ENCODE measurements at regions of chr14 and their contacts with region 1.

Region 1: GRCh38 chr14:55221186-55221585 is 29.8 kb upstream of the DLGAP5 start:
- DNase-seq: peak; percentile 71
- H3K4me3 ChIP-seq: no peak overlapping the region
- H3K27ac ChIP-seq: no peak overlapping the region
- H3K4me1 ChIP-seq: peaks cover 11% of the 10 kb centered on the region
- H3K27me3 ChIP-seq: no peaks in the 10 kb centered on the region
- CTCF ChIP-seq: no peak
- POLR2A ChIP-seq: no peak

Region 2: DNA sequence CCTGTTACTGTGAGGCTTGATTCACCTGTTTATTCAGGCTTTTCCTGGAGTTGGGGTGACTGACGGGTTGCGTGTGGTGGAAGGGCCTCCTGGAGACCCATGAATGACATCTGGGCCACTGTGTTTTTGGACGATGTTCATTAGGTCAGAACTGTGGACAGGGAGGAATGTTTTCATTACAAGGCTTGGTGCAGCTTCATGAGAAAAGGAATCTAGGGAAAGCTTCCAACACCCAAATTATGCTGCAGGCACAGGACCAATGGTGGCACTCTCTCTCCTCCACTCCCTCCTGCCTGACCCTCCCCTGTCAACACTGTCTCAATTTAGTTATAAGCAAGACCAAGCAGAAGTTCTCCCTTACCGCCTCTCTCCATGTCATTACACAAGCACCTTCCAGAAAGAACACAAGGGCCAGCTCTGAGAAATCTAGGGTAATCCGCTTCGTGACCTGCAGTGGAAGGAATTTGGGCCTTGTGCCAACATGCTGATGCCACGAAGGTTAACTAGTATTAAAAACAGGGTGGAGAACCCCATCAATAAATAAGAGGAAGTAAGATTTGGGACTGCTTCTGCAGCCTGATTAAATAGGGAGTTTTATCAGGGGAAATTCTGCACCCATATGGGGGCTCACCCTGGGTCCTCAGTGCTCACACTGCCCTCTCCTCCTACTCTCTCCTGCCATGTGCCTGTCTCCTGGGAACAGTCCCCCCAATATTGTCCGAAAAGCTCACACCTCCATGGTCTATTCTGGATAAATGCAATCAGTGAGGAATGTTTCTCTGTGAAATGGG is 559.2 kb after region 1 on chr14:
- CTCF ChIA-PET with region 1: no interaction called
- POLR2A ChIA-PET with region 1: no interaction called
- dilution Hi-C with region 1: loop called (anchors 25 kb)
- intact Hi-C with region 1: no loop called
- DNase-seq: peak; percentile 95
- H3K4me3 ChIP-seq: no peak overlapping the region
- H3K27ac ChIP-seq: peak overlapping the region; percentile 44
- H3K4me1 ChIP-seq: peaks cover 18% of the 10 kb centered on the region
- H3K27me3 ChIP-seq: no peaks in the 10 kb centered on the region
- CTCF ChIP-seq: no peak
- POLR2A ChIP-seq: peak; percentile 51

Measured in endothelial cell of umbilical vein (primary cell).